Dorsolateral prefrontal cortex (tissue), 120 donors: ENCODE measurements at regions of chr17 and their contacts with region 1.

Region 1: GRCh38 chr17:55264645-55265298 is at the start of gene HLF:
- DNase-seq: peak; percentile 69 to 92 (median 84)
- H3K4me3 ChIP-seq: peak within 1 kb of the TSS; percentile 51 to 88 (median 75)
- H3K27ac ChIP-seq: peak within 1 kb of the TSS in 58 of 59 donors; percentile 2 to 95 (median 86)
- H3K27me3 ChIP-seq: peaks cover 0 to 5% (median 0%) of the 10 kb centered on the region in 45 donors
- CTCF ChIP-seq: peak in 13 of 56 donors; percentile 7 to 41 (median 19)
- total RNA-seq, gene HLF: 36.7 to 194 (median 124) TPM

Region 2: DNA sequence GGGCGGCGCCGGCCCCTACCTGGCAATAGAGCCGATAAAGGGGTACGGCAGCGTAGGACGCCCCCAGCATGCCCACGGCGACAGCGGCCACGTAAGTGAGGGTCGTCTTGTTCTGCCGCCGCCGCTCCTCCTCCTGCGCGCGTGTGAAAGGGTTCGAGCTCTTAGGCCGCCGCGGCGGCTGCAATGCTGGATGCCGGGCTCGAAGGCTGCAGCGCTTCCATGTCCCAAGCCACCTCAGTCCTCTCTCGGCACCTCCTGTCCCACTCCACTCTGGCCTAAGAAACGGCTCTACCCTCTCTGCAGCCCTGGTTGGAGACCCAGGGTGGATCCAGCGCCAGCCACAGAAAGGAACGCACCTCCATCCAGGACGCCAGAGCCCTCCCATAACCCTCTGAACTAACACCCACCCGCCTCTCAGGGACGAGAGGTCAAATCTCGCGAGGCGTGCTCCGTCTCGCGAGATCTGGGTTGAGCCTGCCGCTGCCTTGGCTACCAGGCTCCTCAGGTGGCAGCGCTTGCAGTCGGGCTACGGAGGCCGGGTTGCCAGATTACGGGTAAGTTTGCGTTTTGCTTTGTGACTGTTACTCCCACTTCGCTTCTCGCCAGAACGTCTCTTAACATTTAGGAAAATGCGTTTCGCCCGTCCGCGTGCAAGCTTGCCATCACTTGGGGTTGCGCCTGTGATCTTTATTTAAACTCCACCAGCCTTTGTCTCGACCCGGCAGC is 296.3 kb before region 1 on chr17 and contains the starts of genes COX11 and STXBP4:
- intact Hi-C with region 1: loop called in 1 of 2 experiments (anchors 10 kb)
- DNase-seq: peak; percentile 89 to 98 (median 95)
- H3K4me3 ChIP-seq: peak within 1 kb of the TSS; percentile 59 to 98 (median 89)
- H3K27ac ChIP-seq: peak within 1 kb of the TSS in 58 of 59 donors; percentile 18 to 94 (median 80)
- H3K27me3 ChIP-seq: no peaks in the 10 kb centered on the region
- CTCF ChIP-seq: peak in 39 of 56 donors; percentile 6 to 62 (median 41)
- total RNA-seq, gene COX11: 71.8 to 129 (median 94.8) TPM
- total RNA-seq, gene STXBP4: 5.5 to 19.9 (median 11.5) TPM

Region 3: GRCh38 chr17:55238179-55238930 is 26.4 kb before region 1 on chr17:
- intact Hi-C with region 1: loop called (anchors 1 kb)
- DNase-seq: peak; percentile 91 to 96 (median 94)
- H3K4me3 ChIP-seq: peak overlapping the region; percentile 39 to 79 (median 66)
- H3K27ac ChIP-seq: peak overlapping the region in 58 of 59 donors; percentile 53 to 98 (median 90)
- H3K27me3 ChIP-seq: no peaks in the 10 kb centered on the region
- CTCF ChIP-seq: peak in 40 of 56 donors; percentile 5 to 63 (median 29)

Region 4: DNA sequence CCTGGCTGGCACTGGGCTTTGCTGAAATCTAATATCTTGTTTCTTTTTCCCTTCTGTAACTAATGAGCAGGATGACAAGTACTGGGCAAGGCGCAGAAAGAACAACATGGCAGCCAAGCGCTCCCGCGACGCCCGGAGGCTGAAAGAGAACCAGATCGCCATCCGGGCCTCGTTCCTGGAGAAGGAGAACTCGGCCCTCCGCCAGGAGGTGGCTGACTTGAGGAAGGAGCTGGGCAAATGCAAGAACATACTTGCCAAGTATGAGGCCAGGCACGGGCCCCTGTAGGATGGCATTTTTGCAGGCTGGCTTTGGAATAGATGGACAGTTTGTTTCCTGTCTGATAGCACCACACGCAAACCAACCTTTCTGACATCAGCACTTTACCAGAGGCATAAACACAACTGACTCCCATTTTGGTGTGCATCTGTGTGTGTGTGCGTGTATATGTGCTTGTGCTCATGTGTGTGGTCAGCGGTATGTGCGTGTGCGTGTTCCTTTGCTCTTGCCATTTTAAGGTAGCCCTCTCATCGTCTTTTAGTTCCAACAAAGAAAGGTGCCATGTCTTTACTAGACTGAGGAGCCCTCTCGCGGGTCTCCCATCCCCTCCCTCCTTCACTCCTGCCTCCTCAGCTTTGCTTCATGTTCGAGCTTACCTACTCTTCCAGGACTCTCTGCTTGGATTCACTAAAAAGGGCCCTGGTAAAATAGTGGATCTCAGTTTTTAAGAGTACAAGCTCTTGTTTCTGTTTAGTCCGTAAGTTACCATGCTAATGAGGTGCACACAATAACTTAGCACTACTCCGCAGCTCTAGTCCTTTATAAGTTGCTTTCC is 56.0 kb after region 1 on chr17:
- intact Hi-C with region 1: no loop called
- DNase-seq: peak in 2 of 10 donors; percentile 32 to 46
- H3K4me3 ChIP-seq: no peak overlapping the region
- H3K27ac ChIP-seq: peak overlapping the region in 4 of 59 donors; percentile 5 to 38 (median 17)
- H3K27me3 ChIP-seq: no peaks in the 10 kb centered on the region
- CTCF ChIP-seq: no peak

Region 5: GRCh38 chr17:55348749-55349354 is 84.1 kb after region 1 on chr17:
- intact Hi-C with region 1: loop called in 1 of 2 experiments (anchors 10 kb)
- DNase-seq: peak in 8 of 10 donors; percentile 22 to 63 (median 43)
- H3K4me3 ChIP-seq: peak overlapping the region in 3 of 59 donors; percentile 6 to 28 (median 15)
- H3K27ac ChIP-seq: peak overlapping the region in 31 of 59 donors; percentile 11 to 87 (median 60)
- H3K27me3 ChIP-seq: no peaks in the 10 kb centered on the region
- CTCF ChIP-seq: peak; percentile 70 to 94 (median 86)